Vagina (tissue), 2 donors: ENCODE measurements at regions of chr2 and their contacts with region 1.

Region 1: DNA sequence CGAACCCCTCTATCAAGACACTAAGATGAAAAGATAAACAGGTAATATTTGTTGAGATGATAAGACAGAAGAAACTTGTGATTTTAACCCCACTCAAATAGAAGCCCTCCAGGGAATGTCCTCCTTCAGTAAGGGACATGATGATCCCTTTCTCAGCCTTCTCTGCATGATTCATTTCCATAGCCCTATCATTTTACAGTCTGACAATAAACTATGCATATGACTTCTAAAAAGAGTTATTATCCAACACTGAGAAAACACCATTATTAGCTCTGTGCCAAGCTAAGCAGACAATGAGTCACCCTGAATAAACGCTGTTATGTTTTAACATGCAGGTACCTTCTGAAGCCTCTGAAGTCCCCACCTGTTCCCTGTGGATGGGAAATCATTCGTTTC is 54.7 kb downstream of the DTNB start:
- DNase-seq: no peak
- H3K4me3 ChIP-seq: no peak overlapping the region
- H3K27ac ChIP-seq: peak overlapping the region; percentile 66
- H3K4me1 ChIP-seq: peaks cover 20% of the 10 kb centered on the region
- H3K27me3 ChIP-seq: no peaks in the 10 kb centered on the region
- CTCF ChIP-seq: no peak
- POLR2A ChIP-seq: no peak

Region 2: GRCh38 chr2:25673300-25674076 is 54.8 kb after region 1 on chr2 and contains the start of gene DTNB:
- intact Hi-C with region 1: loop called (anchors 10 kb)
- DNase-seq: peak in 1 of 2 donors; percentile 91
- H3K4me3 ChIP-seq: peak within 1 kb of the TSS; percentile 86 to 99
- H3K27ac ChIP-seq: peak within 1 kb of the TSS; percentile 94
- H3K4me1 ChIP-seq: peaks cover 13% of the 10 kb centered on the region
- H3K27me3 ChIP-seq: no peaks in the 10 kb centered on the region
- CTCF ChIP-seq: no peak
- POLR2A ChIP-seq: peak in 1 of 2 donors; percentile 53
- total RNA-seq, gene DTNB: 17.9 TPM